ENCODE measurements at regions of chr1 and their contacts with region 1.

Region 1: GRCh38 chr1:160884579-160884978 is 401 bp downstream of the ITLN1 start:
- DNase-seq: no peak
- H3K4me3 Mint-ChIP-seq: no peak overlapping the region
- H3K27ac Mint-ChIP-seq: no peak overlapping the region
- H3K4me1 Mint-ChIP-seq: no peaks in the 10 kb centered on the region
- H3K27me3 Mint-ChIP-seq: peaks cover 3% of the 10 kb centered on the region

Region 2: DNA sequence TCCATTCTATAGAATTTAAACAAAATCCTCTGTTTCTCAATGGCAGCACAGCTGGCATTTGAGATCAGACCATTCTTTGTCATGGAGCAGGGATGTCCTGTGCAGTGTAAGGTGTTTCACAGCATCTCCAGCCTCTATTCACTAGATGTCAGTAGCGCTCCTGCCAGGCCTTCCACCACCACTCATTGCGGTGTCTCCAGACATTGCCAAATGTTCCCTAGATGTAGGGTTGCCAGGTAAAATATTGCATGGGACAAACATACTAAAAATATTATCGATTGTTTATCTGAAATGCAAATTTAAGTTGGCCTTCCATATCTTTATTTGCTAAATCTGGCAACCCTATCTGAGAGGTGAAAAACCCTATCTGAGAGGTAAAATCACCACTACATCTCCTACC is 58.3 kb after region 1 on chr1:
- CTCF ChIA-PET with region 1: no interaction called
- POLR2A ChIA-PET with region 1: no interaction called
- intact Hi-C with region 1: loop called (anchors 10 kb)
- DNase-seq: no peak
- H3K4me3 Mint-ChIP-seq: no peak overlapping the region
- H3K27ac Mint-ChIP-seq: no peak overlapping the region
- H3K4me1 Mint-ChIP-seq: no peaks in the 10 kb centered on the region
- H3K27me3 Mint-ChIP-seq: no peaks in the 10 kb centered on the region

Region 3: DNA sequence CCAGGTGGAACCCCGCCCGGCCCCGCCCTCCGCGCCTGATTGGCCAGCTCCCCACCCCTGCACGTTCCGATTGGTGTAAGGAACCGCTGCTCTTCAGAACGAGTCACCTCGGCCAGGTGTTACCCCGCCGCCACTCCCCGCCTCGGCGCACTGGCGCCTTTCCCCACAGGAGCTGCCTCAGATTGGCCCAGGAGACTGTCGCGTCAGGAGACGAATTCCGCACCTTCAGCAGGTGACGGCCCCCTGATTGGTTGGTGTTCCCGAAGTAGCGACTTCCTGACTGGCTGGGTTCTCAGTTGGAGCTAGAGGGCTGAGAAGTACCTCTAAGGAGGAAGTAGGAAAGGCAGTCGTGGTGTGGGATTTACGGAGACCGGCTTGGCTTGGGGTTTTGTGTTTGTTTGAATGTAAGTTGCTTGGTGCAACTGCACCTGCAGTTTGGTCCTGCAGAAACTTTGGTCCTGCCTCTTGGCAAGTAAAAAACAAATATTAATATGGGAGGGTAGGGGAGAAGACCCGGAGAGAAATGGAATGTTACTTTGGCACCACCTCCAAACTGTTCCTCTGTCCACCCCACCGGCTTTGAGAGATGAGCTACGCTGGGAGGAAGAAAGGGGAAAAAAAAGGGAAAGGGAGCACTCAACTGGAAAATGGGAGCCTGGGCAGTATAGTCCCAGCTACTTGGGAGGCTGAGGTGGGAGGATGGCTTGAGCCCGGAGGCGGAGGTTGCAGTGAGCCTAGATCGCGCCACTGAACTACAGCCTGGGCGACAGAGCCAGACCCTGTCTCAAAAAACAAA is 136.8 kb after region 1 on chr1:
- CTCF ChIA-PET with region 1: no interaction called
- POLR2A ChIA-PET with region 1: no interaction called
- intact Hi-C with region 1: no loop called
- DNase-seq: peak; percentile 92
- H3K4me3 Mint-ChIP-seq: peak overlapping the region; percentile 86
- H3K27ac Mint-ChIP-seq: peak overlapping the region; percentile 82
- H3K4me1 Mint-ChIP-seq: peaks cover 51% of the 10 kb centered on the region
- H3K27me3 Mint-ChIP-seq: no peaks in the 10 kb centered on the region

Measured in activated CD4-positive, alpha-beta memory T cell treated with anti-CD3 and anti-CD28 coated beads for 36 hours (primary cell).